GM10248 (cell line): ENCODE measurements at regions of chr17 and their contacts with region 1.

Region 1: DNA sequence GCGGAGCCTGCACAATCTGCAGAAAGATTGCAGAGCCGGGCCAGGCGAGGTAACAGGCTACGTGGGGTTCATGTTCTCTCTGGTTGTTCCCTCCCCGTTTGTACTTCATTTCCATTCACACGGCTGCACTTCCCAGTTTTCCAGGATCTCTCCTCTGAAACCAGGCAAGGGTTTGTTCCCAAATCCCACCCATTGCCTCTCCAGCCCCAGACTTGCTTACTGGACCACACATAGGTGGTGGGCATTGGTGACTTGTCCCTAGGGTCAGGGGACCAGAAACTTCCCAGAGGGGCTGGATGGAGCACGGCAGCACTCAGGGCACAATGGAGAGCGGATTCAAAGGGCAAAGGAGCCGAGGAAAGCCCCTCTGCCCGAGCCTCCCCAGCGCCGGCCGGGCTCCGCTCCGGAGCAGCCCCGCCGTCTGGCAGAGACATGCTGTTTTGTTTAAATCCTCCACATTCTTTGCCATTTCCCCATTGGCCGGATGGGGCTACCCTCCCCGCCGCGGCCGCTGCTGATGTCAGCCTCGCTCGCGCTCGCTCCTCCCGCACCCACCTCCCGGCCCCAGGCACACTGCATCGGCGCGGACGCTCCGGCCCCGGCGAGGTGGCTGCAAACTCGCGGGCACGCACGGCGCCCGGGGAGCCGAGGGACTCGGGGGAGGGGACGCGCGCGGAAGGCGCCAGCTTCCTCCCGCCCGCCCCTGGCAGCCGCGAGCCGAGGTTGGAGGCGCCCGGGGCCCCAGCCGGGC is at the start of gene PITPNC1:
- DNase-seq: peak; percentile 86
- CTCF ChIP-seq: no peak

Region 2: DNA sequence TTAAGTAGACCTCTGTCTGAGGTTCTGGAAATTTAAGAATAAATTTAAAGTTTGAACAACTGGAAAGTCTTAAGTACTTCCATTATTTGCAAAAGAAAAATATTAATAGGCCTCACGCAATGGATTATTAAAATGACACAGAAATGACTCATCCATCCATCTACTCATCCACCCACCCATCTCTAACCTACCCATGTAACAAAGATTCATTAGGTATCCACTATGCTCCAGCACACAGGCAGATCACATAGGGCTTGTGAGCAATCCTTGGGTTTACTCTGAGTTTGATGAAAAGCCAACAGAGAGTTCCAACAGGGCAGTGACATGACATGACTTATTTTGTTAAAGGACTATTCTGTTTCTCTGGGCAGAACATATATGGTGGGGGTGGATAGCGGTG is 225.2 kb before region 1 on chr17:
- CTCF ChIA-PET with region 1: no interaction called
- POLR2A ChIA-PET with region 1: no interaction called
- DNase-seq: no peak
- CTCF ChIP-seq: no peak

Region 3: DNA sequence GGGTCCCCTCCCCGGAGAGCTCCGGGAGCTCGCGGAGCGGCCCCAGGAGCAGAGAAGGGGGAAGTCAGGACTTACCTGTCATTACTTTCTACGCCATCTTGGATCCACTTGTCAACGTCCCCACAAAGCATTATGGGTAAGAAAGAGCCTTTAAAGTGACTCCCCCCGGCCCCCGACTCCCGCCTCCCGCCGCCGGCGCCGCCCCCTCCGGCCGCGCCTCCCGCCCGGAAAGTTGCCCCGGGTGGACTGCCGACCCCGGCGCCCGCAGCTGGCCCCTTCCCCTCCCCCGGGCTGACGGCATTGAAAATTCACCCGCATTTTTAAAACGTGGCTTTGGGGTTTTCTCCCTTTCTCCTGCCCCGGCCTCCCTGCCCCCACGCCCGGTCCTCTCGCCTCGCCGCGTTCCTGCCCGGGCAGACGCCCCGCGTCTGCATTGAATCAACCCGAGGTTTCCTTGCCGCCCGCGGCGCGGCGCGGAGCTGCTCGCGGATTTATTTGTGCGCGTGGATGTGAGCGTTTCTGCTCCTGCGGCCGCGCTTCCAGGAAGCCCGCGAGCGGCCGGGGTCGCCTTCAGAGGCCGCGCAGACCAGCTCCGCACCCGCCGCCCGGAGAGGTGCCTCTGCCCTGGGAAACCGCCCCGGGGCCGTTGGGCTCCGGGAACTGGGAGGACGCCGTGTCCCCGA is 131.7 kb before region 1 on chr17 and contains the start of gene HELZ:
- CTCF ChIA-PET with region 1: no interaction called
- POLR2A ChIA-PET with region 1: no interaction called
- DNase-seq: peak; percentile 91
- CTCF ChIP-seq: no peak

Region 4: GRCh38 chr17:67312265-67312664 is 64.6 kb before region 1 on chr17:
- CTCF ChIA-PET with region 1: no interaction called
- POLR2A ChIA-PET with region 1: no interaction called
- DNase-seq: no peak
- CTCF ChIP-seq: no peak

Region 5: DNA sequence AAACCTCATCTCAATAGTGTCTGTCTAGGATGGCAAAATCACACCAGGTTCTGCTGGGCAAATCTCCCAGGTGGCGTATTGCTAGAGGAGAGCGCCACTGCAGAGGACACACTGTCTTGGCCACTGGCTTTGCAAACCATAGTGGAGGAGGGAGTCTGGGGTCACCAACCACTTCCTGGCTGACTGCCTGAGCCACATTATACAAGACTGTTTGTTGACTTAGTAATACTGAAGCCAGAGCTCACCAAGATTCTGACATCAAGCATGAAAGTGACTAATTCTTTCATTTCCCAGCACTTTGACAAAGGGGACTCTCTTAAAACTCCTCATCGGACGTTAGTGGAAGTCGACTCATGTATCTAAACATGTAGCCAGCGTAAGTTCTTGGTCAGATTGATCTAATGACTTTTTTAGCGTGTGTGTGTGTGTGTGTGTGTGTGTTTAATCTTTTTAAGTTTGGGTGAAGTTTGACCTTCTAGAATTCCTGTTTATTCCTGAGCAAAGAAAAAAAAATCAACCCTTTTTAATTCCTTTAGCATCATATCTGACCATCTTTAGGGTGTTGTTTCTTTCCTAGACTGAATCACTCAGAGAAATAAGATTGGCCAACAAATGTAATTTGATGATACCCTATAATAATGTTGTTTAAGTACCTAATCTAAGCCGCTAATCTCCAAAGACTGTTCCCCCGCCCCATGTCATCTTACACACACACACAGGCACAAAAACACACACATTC is 13.9 kb after region 1 on chr17:
- CTCF ChIA-PET with region 1: interaction called, 108 read pairs
- POLR2A ChIA-PET with region 1: no interaction called
- DNase-seq: peak; percentile 76
- CTCF ChIP-seq: no peak

Region 6: DNA sequence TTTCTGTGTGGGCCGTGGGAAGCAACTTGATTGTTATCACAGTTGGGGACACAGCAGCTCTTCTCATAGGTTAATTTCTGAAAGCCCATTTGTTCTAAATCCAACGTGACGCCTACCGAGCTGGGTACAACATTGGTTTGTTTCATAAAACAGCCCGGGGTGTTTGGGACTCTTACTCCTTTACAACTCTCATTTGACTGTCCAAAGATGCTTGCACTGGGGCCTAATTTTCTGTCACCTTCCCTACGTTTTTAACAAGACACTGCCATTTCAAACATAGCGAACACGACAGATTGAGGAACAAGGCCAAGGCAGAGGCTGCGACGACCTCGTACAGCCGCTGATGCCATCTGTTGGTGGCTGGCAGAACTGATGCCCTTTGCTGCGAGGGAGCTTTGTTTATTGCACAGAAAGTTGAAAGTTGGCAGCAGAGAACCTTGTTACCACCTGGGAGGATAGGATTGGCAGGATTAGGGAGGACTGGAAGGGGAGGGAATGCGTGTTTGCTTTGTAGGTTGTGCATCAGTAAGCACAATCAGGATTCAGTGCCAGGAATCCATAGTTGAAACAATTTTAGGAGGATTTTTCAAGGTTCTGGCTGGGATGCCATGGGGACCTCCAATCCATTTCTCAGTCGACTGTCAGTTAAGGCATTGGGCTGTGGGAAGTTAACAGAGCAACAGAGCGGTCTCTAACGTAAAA is 98.5 kb after region 1 on chr17:
- CTCF ChIA-PET with region 1: interaction called, 70 read pairs
- POLR2A ChIA-PET with region 1: no interaction called
- DNase-seq: peak; percentile 76
- CTCF ChIP-seq: peak; percentile 95

Region 7: GRCh38 chr17:67569873-67570272 is 193.0 kb after region 1 on chr17:
- CTCF ChIA-PET with region 1: interaction called, 10 read pairs
- POLR2A ChIA-PET with region 1: no interaction called
- DNase-seq: no peak
- CTCF ChIP-seq: no peak

Region 8: DNA sequence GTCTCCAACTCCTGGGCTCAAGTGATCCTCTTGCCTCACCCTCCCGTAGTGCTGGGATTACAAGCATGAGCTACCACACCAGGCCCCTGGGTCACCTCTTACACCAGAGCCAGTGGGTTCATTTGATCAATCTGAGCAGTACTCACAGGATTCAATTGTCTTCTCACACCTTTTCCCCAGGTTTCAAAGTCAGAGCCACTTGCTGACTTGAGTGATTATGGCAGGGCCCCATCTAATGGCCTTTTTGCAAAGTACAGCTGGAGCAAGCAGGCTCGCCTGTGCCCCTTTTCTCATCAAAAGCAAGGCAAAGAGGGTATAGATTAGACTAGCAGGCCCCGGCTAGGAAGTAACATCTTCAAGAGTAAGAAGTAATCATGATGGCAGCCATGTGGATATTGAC is 226.0 kb after region 1 on chr17:
- CTCF ChIA-PET with region 1: interaction called, 72 read pairs
- POLR2A ChIA-PET with region 1: no interaction called
- DNase-seq: peak; percentile 79
- CTCF ChIP-seq: peak; percentile 79

Region 9: DNA sequence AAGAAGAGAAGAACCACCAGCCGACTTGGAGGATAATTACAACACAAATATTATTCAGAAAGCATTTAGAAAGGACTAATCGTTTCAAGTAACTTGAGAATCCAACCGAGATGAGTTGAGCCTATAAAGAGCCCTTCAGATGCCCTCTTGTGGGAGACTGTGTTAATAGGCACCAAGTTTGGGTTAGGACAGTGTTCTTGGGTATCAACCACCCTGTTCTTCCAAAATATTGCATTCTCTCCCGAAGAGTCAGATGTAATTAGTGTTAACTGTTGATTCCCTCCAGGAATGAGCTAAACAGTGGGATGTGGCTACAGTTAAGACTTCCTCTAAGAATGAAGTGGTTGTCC is 253.0 kb after region 1 on chr17:
- CTCF ChIA-PET with region 1: interaction called, 59 read pairs
- POLR2A ChIA-PET with region 1: no interaction called
- DNase-seq: peak; percentile 43
- CTCF ChIP-seq: peak; percentile 28

Region 10: DNA sequence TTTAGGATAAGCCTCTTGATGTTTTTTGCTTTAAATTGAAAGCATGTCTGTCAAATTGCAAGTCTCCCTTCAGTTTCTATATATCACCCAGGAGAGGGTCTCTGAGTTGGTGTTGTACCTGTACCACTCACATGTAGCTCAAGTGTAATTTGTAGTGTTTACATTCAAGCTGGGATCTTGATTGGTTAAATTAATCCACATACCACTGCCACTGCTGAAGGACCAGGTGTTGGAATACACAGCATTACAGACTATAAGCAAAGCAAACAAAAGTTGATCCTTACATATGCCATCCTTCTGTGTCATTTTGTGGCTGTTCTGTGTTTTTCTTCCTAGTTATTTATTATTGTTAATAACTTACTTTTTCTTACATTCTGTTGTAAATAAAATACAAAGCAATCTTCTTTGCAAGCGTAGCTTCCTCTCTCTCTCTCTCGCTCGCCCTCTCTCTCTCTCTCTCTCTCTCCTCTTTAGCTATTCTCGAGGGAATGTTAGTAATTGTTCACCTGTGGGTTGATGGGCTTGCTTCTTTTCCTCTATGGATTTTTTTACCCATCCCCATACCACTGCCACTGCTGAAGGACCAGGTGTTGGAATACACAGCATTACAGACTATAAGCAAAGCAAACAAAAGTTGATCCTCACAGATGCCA is 320.1 kb after region 1 on chr17:
- CTCF ChIA-PET with region 1: interaction called, 11 read pairs
- POLR2A ChIA-PET with region 1: no interaction called
- DNase-seq: no peak
- CTCF ChIP-seq: no peak